ENCODE measurements at regions of chr5 and their contacts with region 1.

Region 1: DNA sequence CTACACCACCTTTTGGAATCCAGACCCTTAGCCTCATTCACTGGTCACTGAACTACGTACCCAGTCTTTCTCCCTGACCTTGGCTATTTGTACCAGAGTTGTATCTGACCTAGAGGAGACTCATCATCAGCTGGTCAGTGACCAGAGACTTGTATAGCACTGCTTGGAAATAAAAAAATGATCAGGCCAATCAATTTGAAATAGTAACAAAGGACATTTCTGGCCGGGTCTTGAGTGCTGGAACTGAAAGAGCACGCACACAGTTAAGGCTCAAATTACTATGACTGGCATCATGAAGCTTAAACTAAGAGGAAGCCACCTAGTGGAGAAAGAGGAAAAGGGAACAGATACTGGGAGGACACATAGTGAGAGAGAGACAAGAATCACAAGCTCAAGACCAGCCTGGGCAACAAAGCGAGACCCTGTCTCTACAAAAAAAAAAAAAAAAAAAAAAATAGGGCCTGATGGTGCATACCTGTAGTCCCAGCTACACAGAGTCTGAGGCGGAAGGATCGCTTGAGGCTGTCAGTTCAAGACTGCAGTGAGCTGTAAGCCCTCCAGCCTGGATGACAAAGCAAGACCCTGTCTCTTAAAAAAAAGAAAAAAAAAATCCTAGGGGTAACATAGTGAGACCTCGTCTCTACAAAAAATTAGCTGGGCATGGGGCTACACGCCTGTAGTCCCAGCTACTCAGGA is 12.8 kb upstream of the SRP19 start:
- DNase-seq: no peak
- ATAC-seq: peak; percentile 95
- H3K4me3 Mint-ChIP-seq: peak overlapping the region; percentile 56
- H3K27ac Mint-ChIP-seq: peak overlapping the region; percentile 85
- H3K4me1 Mint-ChIP-seq: peaks cover 20% of the 10 kb centered on the region
- H3K27me3 Mint-ChIP-seq: no peaks in the 10 kb centered on the region
- CTCF ChIP-seq: peak; percentile 54

Region 2: DNA sequence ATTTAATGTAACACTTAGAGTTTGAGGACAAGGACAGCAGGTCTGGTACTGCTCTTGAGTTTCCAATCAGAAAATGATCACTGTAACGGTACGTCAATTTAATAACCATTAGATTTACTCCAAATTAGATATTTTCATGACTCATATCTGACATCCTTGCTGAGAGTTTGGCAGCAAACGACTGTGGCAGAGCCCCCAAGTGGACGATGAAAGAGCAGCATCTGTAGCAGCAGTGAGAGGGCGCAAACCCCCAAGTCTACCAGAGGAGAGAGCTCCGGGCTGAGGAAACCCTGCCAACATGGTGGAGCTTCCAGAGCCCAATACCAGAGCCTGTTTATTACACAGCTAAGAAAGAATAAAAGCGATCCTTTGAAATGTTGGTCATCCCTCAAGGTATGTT is 356.0 kb before region 1 on chr5:
- CTCF ChIA-PET with region 1: interaction called, 11 read pairs
- POLR2A ChIA-PET with region 1: no interaction called
- DNase-seq: peak; percentile 69
- ATAC-seq: peak; percentile 100
- H3K4me3 Mint-ChIP-seq: no peak overlapping the region
- H3K27ac Mint-ChIP-seq: no peak overlapping the region
- H3K4me1 Mint-ChIP-seq: no peaks in the 10 kb centered on the region
- H3K27me3 Mint-ChIP-seq: no peaks in the 10 kb centered on the region
- CTCF ChIP-seq: peak; percentile 42

Region 3: DNA sequence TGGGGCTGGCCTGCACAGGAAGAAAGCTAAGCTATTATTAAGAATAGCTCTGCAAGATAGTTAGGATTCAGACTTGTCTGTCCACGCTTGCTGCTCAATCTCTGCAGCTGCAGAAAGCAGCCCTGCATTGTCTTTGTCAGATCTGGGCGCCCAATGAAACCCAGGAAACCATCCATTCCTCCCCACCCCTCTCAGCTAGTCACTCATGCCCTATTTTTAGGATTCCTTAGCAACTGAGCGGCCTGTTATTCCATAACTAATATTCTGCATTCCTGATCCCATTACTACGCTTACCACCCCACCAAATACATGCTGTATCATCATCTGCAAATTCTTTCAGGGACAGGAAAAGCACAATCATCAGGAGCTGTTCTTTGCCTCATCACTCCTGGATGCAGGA is 163.5 kb before region 1 on chr5:
- CTCF ChIA-PET with region 1: interaction called, 14 read pairs
- POLR2A ChIA-PET with region 1: no interaction called
- DNase-seq: no peak
- ATAC-seq: no peak
- H3K4me3 Mint-ChIP-seq: no peak overlapping the region
- H3K27ac Mint-ChIP-seq: no peak overlapping the region
- H3K4me1 Mint-ChIP-seq: peaks cover 12% of the 10 kb centered on the region
- H3K27me3 Mint-ChIP-seq: no peaks in the 10 kb centered on the region
- CTCF ChIP-seq: no peak

Region 4: DNA sequence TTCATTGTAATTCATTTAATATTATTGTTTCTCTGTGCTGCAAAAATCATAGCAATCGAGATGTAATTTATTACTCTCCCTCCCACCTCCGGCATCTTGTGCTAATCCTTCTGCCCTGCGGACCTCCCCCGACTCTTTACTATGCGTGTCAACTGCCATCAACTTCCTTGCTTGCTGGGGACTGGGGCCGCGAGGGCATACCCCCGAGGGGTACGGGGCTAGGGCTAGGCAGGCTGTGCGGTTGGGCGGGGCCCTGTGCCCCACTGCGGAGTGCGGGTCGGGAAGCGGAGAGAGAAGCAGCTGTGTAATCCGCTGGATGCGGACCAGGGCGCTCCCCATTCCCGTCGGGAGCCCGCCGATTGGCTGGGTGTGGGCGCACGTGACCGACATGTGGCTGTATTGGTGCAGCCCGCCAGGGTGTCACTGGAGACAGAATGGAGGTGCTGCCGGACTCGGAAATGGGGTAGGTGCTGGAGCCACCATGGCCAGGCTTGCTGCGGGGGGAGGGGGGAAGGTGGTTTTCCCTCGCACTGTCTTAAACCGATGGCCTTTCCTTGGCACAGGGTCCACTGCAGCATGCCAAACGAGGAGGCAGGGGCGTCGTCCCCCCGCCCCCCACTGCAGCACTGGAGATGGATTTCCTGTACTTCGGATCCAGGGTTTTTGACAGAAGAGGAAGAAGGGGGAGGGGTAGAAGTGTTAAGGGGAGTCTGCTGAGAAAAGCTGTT is 110.6 kb before region 1 on chr5 and contains the start of gene APC:
- CTCF ChIA-PET with region 1: interaction called, 10 read pairs
- POLR2A ChIA-PET with region 1: no interaction called
- DNase-seq: peak; percentile 92
- ATAC-seq: peak; percentile 97
- H3K4me3 Mint-ChIP-seq: peak within 1 kb of the TSS; percentile 92
- H3K27ac Mint-ChIP-seq: peak within 1 kb of the TSS; percentile 95
- H3K4me1 Mint-ChIP-seq: peaks cover 22% of the 10 kb centered on the region
- H3K27me3 Mint-ChIP-seq: no peaks in the 10 kb centered on the region
- CTCF ChIP-seq: no peak
- total RNA-seq, gene APC: 31.8 to 40.0 TPM (median 33.1 TPM) in 3 replicates

Region 5: GRCh38 chr5:112795944-112796678 is 52.2 kb before region 1 on chr5:
- CTCF ChIA-PET with region 1: interaction called, 12 read pairs
- POLR2A ChIA-PET with region 1: no interaction called
- DNase-seq: no peak
- ATAC-seq: no peak; the same call in 1 of the 2 replicates
- H3K4me3 Mint-ChIP-seq: peak overlapping the region; percentile 46
- H3K27ac Mint-ChIP-seq: peak overlapping the region; percentile 96
- H3K4me1 Mint-ChIP-seq: peaks cover 69% of the 10 kb centered on the region
- H3K27me3 Mint-ChIP-seq: no peaks in the 10 kb centered on the region
- CTCF ChIP-seq: no peak

Region 6: GRCh38 chr5:112860929-112861637 is 12.8 kb after region 1 on chr5 and contains the start of gene SRP19:
- CTCF ChIA-PET with region 1: interaction called, 21 read pairs
- POLR2A ChIA-PET with region 1: interaction called, 3 read pairs
- DNase-seq: peak; percentile 91
- ATAC-seq: peak; percentile 93
- H3K4me3 Mint-ChIP-seq: peak within 1 kb of the TSS; percentile 96
- H3K27ac Mint-ChIP-seq: peak within 1 kb of the TSS; percentile 96
- H3K4me1 Mint-ChIP-seq: peaks cover 17% of the 10 kb centered on the region
- H3K27me3 Mint-ChIP-seq: peaks cover 25% of the 10 kb centered on the region
- CTCF ChIP-seq: no peak
- total RNA-seq, gene SRP19: 41.0 to 56.4 TPM (median 48.8 TPM) in 3 replicates

Region 7: DNA sequence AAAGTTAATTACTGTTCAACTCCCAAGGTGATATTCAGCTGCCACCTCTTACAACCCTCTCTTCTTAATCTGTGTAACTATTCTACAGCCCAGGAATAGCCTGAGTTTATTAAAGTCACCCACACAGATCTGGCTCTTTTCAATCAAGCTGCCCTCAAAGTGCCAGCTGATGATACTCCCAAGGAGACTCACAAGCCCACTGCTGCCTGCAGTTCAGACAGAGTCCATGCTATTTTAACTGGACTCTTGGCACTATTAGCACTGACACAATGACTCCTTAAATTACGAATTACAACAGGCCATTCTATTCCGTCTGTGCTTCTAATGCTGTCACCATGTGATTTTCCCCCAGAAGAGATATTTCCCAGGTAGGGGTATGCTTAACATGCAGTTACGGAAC is 47.4 kb after region 1 on chr5:
- CTCF ChIA-PET with region 1: no interaction called
- POLR2A ChIA-PET with region 1: no interaction called
- DNase-seq: no peak
- ATAC-seq: no peak
- H3K4me3 Mint-ChIP-seq: no peak overlapping the region
- H3K27ac Mint-ChIP-seq: no peak overlapping the region
- H3K4me1 Mint-ChIP-seq: no peaks in the 10 kb centered on the region
- H3K27me3 Mint-ChIP-seq: no peaks in the 10 kb centered on the region
- CTCF ChIP-seq: no peak